T-cell (primary cell): ENCODE measurements at regions of chr14 and their contacts with region 1.

Region 1: GRCh38 chr14:74860906-74861733 is 14.8 kb downstream of the PROX2 start:
- DNase-seq: peak; percentile 63 to 96 (median 88)
- ATAC-seq: peak; percentile 83 to 90 (median 88)
- H3K4me3 ChIP-seq: no peak overlapping the region
- H3K4me3 Mint-ChIP-seq: no peak overlapping the region
- H3K27ac ChIP-seq: no peak overlapping the region
- H3K27ac Mint-ChIP-seq: no peak overlapping the region
- H3K4me1 ChIP-seq: peaks cover 0 to 9% of the 10 kb centered on the region in 2 experiments
- H3K4me1 Mint-ChIP-seq: peaks cover 8 to 15% (median 11%) of the 10 kb centered on the region in 3 donors
- H3K27me3 ChIP-seq: no peaks in the 10 kb centered on the region
- H3K27me3 Mint-ChIP-seq: no peaks in the 10 kb centered on the region

Region 2: DNA sequence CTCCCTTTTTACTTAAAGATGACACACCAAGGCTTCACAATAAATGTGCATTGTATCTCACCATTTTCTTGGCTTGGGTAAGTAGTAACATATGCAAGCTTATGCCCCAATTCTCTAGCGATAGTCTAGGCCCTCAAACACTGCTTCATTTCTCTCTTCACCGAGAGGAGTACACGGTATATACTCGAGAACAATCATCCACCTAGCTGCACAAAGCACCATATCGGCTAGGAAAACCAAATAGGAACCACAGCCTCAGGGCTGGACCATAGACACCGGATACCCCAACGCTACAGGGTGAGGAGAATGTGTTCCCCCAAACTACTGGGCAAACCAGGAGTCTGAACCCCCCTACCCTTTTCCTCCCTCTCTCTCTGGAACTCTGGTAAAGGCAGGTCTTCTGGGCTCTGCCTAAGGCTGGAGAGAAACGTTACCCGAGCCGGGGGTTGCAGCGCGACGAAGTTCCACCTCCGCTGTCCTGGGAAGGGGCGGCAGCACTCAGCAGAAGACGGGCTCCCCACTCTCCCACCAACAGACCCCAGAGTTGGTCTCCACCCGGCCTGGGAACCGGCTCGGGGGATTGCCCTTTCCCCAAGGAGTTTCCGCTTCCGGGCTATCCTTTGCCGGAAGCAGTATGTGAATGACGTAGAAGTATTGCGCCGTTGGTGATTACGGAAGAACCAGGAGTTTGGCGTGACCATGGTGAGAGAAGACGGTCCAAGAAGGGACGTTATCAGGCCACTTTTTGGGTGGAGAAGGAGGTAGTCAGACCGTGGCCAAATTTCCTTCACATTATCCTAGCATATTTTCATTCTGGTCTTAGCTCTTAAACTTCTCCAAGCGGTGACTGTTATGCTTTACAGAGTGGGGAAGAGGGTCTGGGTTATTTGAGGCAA is 148.4 kb before region 1 on chr14 and contains the starts of genes AREL1 and FCF1:
- CTCF ChIA-PET with region 1: no interaction called
- POLR2A ChIA-PET with region 1: no interaction called
- DNase-seq: peak; percentile 52 to 92 (median 74)
- ATAC-seq: peak; percentile 91 to 97 (median 95)
- H3K4me3 ChIP-seq: peak within 1 kb of the TSS; percentile 68 to 97
- H3K4me3 Mint-ChIP-seq: peak within 1 kb of the TSS; percentile 92 to 93 (median 93)
- H3K27ac ChIP-seq: peak within 1 kb of the TSS; percentile 79
- H3K27ac Mint-ChIP-seq: peak within 1 kb of the TSS; percentile 88 to 94
- H3K4me1 ChIP-seq: peaks cover 15% of the 10 kb centered on the region in 2 experiments
- H3K4me1 Mint-ChIP-seq: peaks cover 61 to 65% (median 63%) of the 10 kb centered on the region in 3 donors
- H3K27me3 ChIP-seq: no peaks in the 10 kb centered on the region
- H3K27me3 Mint-ChIP-seq: no peaks in the 10 kb centered on the region
- total RNA-seq, gene AREL1: 38.7 to 46.2 (median 42.3) TPM
- total RNA-seq, gene FCF1: 38.8 to 48.8 (median 44.8) TPM

Region 3: DNA sequence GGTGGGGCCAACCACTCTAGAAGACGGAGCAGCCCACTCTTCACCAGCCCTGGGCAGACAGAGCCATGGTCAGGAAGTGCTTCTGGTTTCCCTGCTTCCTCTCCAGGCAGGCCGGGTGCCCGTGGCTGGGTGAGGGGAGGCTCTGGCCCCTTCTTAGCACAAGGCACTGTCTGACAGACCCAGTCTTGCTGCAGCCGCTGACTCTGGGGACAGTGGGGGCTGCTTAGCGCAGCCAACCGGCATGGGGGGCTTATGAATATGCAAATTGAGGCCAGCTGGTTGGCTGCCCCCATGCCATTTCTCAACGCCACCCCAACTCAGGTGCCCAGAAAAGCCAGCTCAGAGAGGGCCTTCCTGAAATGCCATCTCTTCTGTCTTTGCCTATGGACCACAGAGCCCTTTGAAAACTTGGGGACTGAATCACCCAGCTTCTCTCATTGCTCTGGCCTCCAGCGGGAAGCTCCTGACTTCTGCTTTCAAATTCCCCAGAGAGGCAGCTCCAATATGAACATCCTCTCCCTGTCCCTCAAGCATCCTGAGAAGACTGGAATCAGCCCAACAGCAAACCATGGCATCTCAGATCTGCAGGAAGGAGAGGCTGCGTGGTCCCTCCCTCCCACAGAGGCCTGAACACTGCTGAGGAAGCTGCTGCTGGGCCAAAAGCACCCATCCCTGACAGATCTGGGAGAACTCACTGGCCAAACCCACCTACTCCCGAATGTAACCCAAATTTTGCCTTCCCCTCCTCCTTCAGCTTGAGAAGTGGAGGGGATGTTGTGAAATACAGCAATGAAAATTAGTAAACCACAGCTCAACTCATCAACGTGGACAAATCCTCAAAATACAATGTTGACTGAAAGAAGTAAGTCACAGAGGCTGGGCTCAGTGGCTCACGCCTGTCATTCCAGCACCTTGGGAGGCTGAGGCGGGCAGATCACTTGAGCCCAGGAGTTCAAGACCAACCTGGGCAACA is 15.1 kb after region 1 on chr14 and contains the start of gene PROX2:
- CTCF ChIA-PET with region 1: interaction called, 13 to 41 read pairs
- POLR2A ChIA-PET with region 1: no interaction called
- DNase-seq: peak in 11 of 35 experiments; percentile 5 to 41 (median 16)
- ATAC-seq: peak; percentile 66 to 87 (median 76)
- H3K4me3 ChIP-seq: peak within 1 kb of the TSS in 1 of 2 donors; percentile 4
- H3K4me3 Mint-ChIP-seq: peak within 1 kb of the TSS in 2 of 3 donors; percentile 26 to 33
- H3K27ac ChIP-seq: no peak within 1 kb of the TSS
- H3K27ac Mint-ChIP-seq: peak within 1 kb of the TSS; percentile 78 to 87
- H3K4me1 ChIP-seq: peaks cover 0 to 23% of the 10 kb centered on the region in 2 experiments
- H3K4me1 Mint-ChIP-seq: peaks cover 35 to 38% (median 36%) of the 10 kb centered on the region in 3 donors
- H3K27me3 ChIP-seq: no peaks in the 10 kb centered on the region
- H3K27me3 Mint-ChIP-seq: no peaks in the 10 kb centered on the region
- total RNA-seq, gene PROX2: 0.10 to 0.12 TPM in 2 of 5 donors, not detected in the others

Region 4: DNA sequence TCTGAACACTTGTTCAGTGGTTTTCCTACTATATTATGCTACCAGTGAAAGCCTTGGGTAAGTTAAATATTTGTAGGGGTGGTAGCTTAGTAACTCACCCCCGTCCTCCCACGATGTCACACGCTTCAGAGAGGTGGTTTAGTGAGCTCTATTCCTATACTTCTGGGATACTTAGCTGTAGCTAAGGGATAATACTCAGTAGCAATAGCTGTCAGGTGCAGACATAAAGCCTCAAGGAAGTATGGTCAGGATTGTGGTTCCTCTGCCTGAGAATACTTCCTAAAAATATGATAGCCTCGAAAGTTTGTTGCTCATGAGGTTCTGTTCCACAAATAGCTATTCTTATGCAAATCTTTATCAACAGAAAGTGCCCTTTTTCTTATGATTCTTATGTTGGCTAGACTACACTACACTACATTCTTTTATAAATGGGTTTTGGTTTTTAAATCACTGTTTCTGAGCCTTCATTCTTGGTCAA is 32.5 kb after region 1 on chr14:
- CTCF ChIA-PET with region 1: interaction called, 6 to 13 read pairs
- POLR2A ChIA-PET with region 1: no interaction called
- DNase-seq: no peak
- ATAC-seq: no peak
- H3K4me3 ChIP-seq: no peak overlapping the region
- H3K4me3 Mint-ChIP-seq: no peak overlapping the region
- H3K27ac ChIP-seq: no peak overlapping the region
- H3K27ac Mint-ChIP-seq: peak overlapping the region in 1 of 2 donors; percentile 69
- H3K4me1 ChIP-seq: peaks cover 0 to 2% of the 10 kb centered on the region in 2 experiments
- H3K4me1 Mint-ChIP-seq: peaks cover 2 to 11% (median 3%) of the 10 kb centered on the region in 3 donors
- H3K27me3 ChIP-seq: no peaks in the 10 kb centered on the region
- H3K27me3 Mint-ChIP-seq: no peaks in the 10 kb centered on the region

Region 5: GRCh38 chr14:74922739-74923401 is 61.8 kb after region 1 on chr14 and contains the start of gene RPS6KL1:
- CTCF ChIA-PET with region 1: interaction called in 1 of 2 experiments, 10 read pairs
- POLR2A ChIA-PET with region 1: no interaction called
- DNase-seq: peak; percentile 22 to 80 (median 58)
- ATAC-seq: peak; percentile 98 to 99 (median 98)
- H3K4me3 ChIP-seq: peak within 1 kb of the TSS; percentile 38 to 48
- H3K4me3 Mint-ChIP-seq: peak within 1 kb of the TSS; percentile 66 to 76 (median 72)
- H3K27ac ChIP-seq: no peak within 1 kb of the TSS
- H3K27ac Mint-ChIP-seq: peak within 1 kb of the TSS in 1 of 2 donors; percentile 43
- H3K4me1 ChIP-seq: peaks cover 0 to 12% of the 10 kb centered on the region in 2 experiments
- H3K4me1 Mint-ChIP-seq: peaks cover 13 to 19% (median 15%) of the 10 kb centered on the region in 3 donors
- H3K27me3 ChIP-seq: peaks cover 0 to 23% of the 10 kb centered on the region in 2 experiments
- H3K27me3 Mint-ChIP-seq: peaks cover 3 to 7% of the 10 kb centered on the region in 2 donors
- total RNA-seq, gene RPS6KL1: 3.2 to 15.3 (median 6.2) TPM